ENCODE measurements at regions of chr17 and their contacts with region 1.

Region 1: GRCh38 chr17:44006598-44007345 is 2.4 kb downstream of the NAGS start:
- DNase-seq: peak; percentile 88
- ATAC-seq: peak; percentile 91
- H3K4me3 Mint-ChIP-seq: peak overlapping the region; percentile 90
- H3K27ac Mint-ChIP-seq: peak overlapping the region; percentile 76
- H3K4me1 Mint-ChIP-seq: peaks cover 24% of the 10 kb centered on the region
- H3K27me3 Mint-ChIP-seq: peaks cover 12% of the 10 kb centered on the region
- CTCF ChIP-seq: no peak

Region 2: DNA sequence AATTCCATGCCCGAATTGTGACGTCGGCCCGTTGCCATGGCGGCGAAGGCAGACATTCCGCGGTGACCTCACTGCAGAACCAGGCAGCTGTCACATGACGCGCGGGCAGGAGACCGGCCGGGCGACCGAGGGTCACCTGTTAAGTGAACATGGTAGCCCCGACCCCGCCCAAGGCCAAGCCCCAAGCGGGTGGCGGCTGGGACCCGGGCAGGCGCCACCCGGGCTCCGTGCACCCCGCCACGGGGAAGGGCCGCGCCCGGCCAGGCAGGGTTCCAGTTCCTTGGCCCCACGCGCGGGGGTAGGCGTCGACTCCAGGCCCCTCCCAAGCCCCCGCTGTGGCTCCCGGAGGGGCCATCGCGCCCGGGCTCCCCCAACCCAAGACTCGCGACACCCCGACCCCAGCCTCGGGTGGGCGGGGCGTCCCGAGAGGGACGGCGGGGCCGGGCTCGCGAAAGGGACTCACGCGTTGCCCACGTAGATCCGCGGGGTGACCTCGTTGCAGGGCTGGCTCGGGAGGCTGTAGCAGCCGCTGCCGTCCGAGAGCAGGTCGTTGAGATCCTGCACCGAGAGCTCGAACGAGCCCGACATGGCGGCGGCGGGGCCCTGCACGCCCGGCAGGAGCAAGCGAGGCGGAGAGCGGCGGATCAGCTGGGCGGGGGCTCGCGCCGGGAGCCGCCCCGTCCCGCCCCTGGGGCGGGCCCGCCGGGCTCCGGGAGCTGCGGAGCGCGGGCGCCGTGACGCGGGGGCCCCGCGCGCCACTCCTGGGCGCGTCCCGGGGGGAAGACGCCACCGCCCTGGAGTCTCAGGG is 228.2 kb before region 1 on chr17 and contains the start of gene DUSP3:
- CTCF ChIA-PET with region 1: no interaction called
- POLR2A ChIA-PET with region 1: no interaction called
- intact Hi-C with region 1: loop called (anchors 2 kb)
- DNase-seq: peak; percentile 79
- ATAC-seq: peak; percentile 94
- H3K4me3 Mint-ChIP-seq: peak within 1 kb of the TSS; percentile 90
- H3K27ac Mint-ChIP-seq: peak within 1 kb of the TSS; percentile 70
- H3K4me1 Mint-ChIP-seq: peaks cover 28% of the 10 kb centered on the region
- H3K27me3 Mint-ChIP-seq: peaks cover 18% of the 10 kb centered on the region
- CTCF ChIP-seq: no peak
- total RNA-seq, gene DUSP3: 16.4 and 16.6 TPM in 2 replicates

Region 3: DNA sequence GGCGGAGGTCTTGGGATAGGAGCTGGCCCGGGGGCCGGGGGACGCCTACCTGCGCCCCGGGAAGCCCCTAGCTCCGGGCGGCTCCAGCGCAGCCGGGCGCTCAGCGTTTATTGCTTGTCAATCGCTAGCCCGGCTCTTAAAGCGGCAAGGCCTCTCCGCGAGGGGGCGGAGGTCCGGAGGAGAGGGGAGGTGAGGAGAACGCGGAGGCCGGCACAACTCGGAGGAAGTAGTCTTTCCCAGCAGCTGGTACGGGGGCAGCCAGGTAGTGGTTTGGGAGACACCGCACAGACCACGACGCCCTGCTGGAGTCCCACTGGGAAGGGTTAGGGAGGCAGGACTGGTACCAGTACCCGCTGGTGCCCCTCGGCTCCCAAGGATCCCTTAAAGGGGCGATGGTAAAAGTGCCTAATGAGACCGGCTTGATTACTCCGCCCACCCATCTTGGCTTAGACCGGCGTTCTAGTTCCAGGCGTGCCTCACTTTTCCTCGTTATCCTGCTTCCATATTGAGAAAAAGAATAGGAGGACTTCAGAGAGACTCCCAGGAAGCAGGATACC is 99.3 kb before region 1 on chr17 and contains the start of gene MPP2:
- CTCF ChIA-PET with region 1: interaction called, 3 read pairs
- POLR2A ChIA-PET with region 1: no interaction called
- intact Hi-C with region 1: loop called (anchors 5 kb)
- DNase-seq: peak; percentile 42
- ATAC-seq: peak; percentile 63
- H3K4me3 Mint-ChIP-seq: peak within 1 kb of the TSS; percentile 73
- H3K27ac Mint-ChIP-seq: peak within 1 kb of the TSS; percentile 35
- H3K4me1 Mint-ChIP-seq: peaks cover 23% of the 10 kb centered on the region
- H3K27me3 Mint-ChIP-seq: peaks cover 50% of the 10 kb centered on the region
- CTCF ChIP-seq: no peak
- total RNA-seq, gene MPP2: not detected in 2 replicates

Region 4: DNA sequence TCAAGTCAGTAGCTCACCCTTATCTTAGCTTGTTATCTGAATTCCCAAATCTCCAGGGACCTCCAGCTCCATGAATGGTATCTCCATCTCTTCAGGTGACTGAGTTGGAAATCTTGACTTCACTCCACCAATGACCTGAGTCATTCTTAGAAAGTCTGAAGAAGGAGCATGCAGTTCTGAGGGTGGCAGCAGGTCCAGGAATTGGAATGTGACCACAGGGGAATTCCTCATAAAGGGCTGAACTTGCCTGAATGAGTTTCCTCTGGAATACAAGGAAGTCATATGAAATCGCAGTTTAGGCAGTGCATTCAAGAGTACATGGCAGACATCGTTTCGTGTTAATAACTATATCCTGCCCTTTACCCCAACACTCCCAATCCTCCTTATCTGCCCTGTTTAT is 40.5 kb before region 1 on chr17:
- CTCF ChIA-PET with region 1: no interaction called
- POLR2A ChIA-PET with region 1: no interaction called
- intact Hi-C with region 1: no loop called
- DNase-seq: no peak
- ATAC-seq: no peak
- H3K4me3 Mint-ChIP-seq: no peak overlapping the region
- H3K27ac Mint-ChIP-seq: no peak overlapping the region
- H3K4me1 Mint-ChIP-seq: peaks cover 5% of the 10 kb centered on the region
- H3K27me3 Mint-ChIP-seq: peaks cover 17% of the 10 kb centered on the region
- CTCF ChIP-seq: no peak

Region 5: GRCh38 chr17:43994272-43995149 is 12.3 kb before region 1 on chr17:
- CTCF ChIA-PET with region 1: no interaction called
- POLR2A ChIA-PET with region 1: no interaction called
- intact Hi-C with region 1: no loop called
- DNase-seq: peak; percentile 50
- ATAC-seq: peak; percentile 85
- H3K4me3 Mint-ChIP-seq: no peak overlapping the region
- H3K27ac Mint-ChIP-seq: no peak overlapping the region
- H3K4me1 Mint-ChIP-seq: peaks cover 4% of the 10 kb centered on the region
- H3K27me3 Mint-ChIP-seq: peaks cover 23% of the 10 kb centered on the region
- CTCF ChIP-seq: no peak

Region 6: DNA sequence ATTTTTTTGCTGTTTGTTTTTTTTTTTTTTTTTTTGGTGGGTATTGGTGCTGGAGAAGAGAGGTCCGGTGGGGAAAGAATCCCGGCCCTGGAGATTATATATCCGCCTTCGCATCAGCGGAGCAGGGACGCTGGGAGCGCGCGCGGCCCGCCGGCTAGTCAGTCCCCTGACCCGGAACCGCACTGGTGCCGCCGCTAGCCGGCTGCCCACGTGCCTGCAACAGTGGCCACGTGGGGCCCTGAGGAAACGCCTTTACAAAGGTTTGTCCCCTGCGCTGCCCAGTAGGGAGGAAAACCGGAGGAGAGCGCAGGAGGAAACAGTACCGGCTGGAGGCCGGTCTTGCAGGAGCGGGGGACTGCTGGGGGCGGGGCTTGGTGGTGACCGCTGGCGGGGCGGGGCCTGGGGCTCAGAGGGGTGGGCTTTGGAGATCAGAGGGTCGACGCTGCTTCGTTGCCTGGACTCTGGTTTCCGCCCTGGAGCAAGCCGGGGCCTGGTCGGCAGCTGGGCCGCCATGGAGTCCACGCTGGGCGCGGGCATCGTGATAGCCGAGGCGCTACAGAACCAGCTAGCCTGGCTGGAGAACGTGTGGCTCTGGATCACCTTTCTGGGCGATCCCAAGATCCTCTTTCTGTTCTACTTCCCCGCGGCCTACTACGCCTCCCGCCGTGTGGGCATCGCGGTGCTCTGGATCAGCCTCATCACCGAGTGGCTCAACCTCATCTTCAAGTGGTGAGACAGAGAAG is 63.9 kb after region 1 on chr17 and contains the start of gene G6PC3:
- CTCF ChIA-PET with region 1: no interaction called
- POLR2A ChIA-PET with region 1: no interaction called
- intact Hi-C with region 1: loop called (anchors 2 kb)
- DNase-seq: peak; percentile 73
- ATAC-seq: peak; percentile 73
- H3K4me3 Mint-ChIP-seq: peak within 1 kb of the TSS; percentile 97
- H3K27ac Mint-ChIP-seq: peak within 1 kb of the TSS; percentile 95
- H3K4me1 Mint-ChIP-seq: peaks cover 44% of the 10 kb centered on the region
- H3K27me3 Mint-ChIP-seq: no peaks in the 10 kb centered on the region
- CTCF ChIP-seq: no peak
- total RNA-seq, gene G6PC3: 30.9 and 35.2 TPM in 2 replicates